Right ventricle myocardium inferior (tissue), 1 donor: ENCODE measurements at regions of chr4 and their contacts with region 1.

Region 1: DNA sequence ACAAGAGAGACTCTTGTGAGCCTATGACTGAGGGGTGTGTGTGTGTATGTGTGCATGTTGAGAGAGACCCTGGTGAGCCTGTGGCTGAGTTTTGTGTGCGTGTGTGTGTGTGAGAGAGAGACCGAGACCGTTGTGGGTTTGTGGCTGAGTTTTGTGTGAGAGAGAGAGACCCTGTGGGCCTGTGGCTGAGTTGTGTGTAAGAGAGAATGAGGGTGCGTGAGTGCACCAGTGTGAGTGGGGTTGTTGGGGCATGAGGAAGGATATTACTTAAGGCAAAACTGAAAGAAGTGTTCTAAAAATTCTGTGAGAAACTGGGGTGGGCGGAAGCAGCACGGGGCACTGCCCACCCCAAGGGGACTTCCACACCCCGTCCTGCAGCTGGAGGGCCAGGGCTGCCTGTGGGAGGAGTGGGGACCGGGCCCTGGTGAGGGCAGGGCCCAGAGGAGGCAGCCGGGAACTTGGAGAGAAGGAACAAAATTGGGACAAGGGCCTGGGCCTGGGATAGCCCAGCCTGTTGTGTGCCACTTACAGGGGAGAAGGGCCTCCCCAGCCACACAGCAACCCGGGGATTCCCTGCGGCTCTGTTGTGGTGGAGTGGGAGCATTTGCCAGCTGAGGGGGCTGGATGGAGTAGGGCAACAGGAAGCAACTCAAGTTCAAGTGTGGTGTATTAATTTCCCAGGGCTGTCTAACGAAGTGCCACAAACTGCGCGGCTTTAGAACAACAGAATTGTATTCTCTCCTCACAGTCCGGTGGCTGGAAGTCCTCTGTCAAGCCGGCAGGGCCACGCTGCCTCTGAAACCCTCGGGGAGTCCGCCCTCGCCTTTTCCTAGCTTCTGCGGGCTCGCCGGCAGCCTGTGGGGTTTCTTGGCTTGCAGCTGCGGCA is 22.1 kb downstream of the TMEM131L start:
- DNase-seq: no peak
- ATAC-seq: peak; percentile 54

Region 2: GRCh38 chr4:153432968-153433753 is 55.1 kb before region 1 on chr4:
- intact Hi-C with region 1: no loop called
- DNase-seq: peak; percentile 70
- ATAC-seq: peak; percentile 83

Region 3: DNA sequence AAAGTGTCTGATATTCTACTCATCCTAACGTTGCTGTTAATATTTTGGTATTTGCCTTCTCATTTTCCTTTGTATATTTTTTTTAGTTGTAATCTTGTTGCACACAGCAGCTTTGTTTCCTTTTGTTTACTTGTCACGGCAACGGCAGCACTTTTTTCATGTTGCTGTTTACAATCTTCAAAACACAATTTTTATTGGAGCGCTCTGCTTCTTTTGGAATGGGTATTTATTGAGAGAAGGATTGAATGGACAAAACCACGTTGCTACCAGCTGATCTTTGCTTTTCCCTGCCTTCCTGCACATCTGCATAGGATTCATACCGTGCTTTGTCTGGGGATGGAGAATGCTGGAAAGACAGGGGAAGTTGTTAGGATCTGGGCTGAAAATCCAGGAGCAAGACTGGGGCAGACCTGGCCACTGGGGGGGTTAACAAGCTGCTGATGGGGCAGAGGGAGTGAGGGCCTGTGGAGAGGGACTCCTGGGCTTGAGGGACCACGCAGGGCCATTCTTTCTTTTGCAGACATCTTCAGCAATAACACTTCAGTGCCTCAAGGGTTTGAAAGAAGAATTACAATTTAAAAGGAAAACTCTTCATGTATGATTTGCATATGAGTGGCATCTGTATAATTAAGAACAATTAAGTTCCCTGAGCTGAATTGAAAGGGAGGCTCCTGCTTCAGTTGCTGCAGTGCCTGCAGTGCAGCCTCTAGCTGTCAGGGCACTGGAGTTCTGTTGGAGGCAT is 47.7 kb after region 1 on chr4:
- intact Hi-C with region 1: loop called (anchors 5 kb)
- DNase-seq: no peak
- ATAC-seq: no peak

Region 4: DNA sequence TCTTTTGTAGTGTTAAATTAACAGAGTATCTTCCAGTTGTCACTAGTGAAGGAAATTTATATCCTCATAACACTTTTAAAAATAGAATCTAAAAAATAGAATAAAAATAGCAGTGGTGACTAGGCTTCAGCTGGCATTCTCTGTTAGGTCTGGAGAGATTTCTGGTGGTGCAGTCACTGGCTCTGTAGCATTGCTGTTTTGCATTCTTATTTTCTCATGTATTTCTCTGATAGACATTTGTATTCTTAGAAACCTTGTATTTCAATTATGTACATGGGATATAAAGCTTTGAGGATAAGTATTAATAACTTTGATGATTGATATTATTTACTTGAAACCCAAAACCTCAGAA is 65.5 kb after region 1 on chr4:
- intact Hi-C with region 1: loop called (anchors 5 kb)
- DNase-seq: no peak
- ATAC-seq: peak; percentile 67